GM13977 (cell line): ENCODE measurements at regions of chr15 and their contacts with region 1.

Region 1: GRCh38 chr15:85707519-85708338 is 87.0 kb downstream of the KLHL25 start:
- DNase-seq: no peak
- CTCF ChIP-seq: no peak

Region 2: GRCh38 chr15:85485956-85486567 is 221.7 kb before region 1 on chr15:
- in situ Hi-C with region 1: loop called (anchors 25 kb)
- DNase-seq: peak; percentile 72
- CTCF ChIP-seq: peak; percentile 79

Region 3: GRCh38 chr15:85785887-85786780 is 78.4 kb after region 1 on chr15:
- in situ Hi-C with region 1: no loop called
- DNase-seq: peak; percentile 19
- CTCF ChIP-seq: no peak

Region 4: GRCh38 chr15:86373147-86373546 is 665.4 kb after region 1 on chr15:
- in situ Hi-C with region 1: no loop called
- DNase-seq: no peak
- CTCF ChIP-seq: no peak